Dendritic cell treated with granulocyte-macrophage colony-stimulating factor and Interleukin-4, amounts not matched to agents 40 ng/mL and 50 ng/mL, for 4 days (primary cell): ENCODE measurements at regions of chr15 and their contacts with region 1.

Region 1: GRCh38 chr15:25438601-25439368 is at the start of gene UBE3A:
- H3K4me3 Mint-ChIP-seq: peak within 1 kb of the TSS; percentile 87
- H3K27ac Mint-ChIP-seq: peak within 1 kb of the TSS; percentile 91
- H3K4me1 Mint-ChIP-seq: peaks cover 6% of the 10 kb centered on the region
- H3K27me3 Mint-ChIP-seq: peaks cover 3% of the 10 kb centered on the region

Region 2: DNA sequence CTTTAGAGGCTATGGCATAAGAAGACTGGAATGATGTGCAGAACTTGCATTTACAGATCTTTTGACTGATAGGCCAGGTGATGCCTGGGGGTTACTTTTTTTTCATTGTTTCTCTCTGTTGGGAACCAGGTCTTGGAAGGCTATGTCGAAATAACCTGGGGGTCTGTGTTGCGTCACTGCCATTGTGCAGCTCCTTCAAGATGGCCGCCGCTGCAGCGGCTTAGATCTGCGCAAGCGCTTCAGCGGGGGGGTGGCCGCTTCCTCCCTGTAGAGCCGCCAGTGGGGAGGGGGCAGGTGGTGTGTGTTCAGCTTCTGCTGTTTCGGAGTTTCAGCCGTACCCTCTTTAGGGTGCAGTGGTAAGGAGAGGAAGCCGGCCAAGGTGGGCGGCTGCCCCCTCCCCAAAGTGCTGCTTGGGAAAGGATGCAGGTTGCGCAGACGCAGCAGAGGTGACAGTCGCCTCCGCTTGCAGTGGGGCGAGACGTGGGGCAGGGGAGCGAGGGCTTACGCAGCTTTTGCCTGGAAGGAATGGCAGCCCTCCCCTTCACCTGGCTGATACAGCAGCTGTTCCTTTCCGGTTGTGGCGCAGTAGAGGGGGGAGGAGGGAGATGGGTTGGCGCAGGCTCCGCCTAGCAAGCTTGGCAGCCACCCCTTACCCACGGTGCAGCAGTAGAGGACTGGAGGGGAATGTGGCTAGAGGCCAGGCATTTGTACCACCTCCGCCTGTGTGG is 482.5 kb before region 1 on chr15:
- intact Hi-C with region 1: loop called (anchors 10 kb)
- H3K4me3 Mint-ChIP-seq: peak overlapping the region; percentile 78
- H3K27ac Mint-ChIP-seq: peak overlapping the region; percentile 85
- H3K4me1 Mint-ChIP-seq: no peaks in the 10 kb centered on the region
- H3K27me3 Mint-ChIP-seq: peaks cover 23% of the 10 kb centered on the region

Region 3: DNA sequence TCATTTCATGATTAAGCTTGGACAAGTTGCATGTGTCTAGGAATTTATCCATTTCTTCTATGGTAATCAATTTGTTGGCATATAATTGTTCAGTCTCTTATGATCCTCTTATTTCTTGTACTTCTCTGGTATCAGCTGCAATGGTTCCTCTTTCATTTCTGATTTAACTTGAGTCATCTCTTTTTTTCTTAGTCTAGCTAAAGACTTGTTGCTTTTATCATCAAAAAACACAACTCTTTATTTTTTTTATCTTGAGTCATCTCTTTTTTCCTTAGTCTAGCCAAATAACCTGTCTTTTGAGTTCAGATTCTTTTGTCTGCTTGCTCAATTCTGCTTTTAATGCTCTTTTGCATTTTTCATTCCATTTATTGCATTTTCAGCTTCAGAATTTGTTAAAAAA is 37.3 kb before region 1 on chr15:
- intact Hi-C with region 1: loop called (anchors 5 kb)
- H3K4me3 Mint-ChIP-seq: peak overlapping the region; percentile 9
- H3K27ac Mint-ChIP-seq: peak overlapping the region; percentile 85
- H3K4me1 Mint-ChIP-seq: peaks cover 64% of the 10 kb centered on the region
- H3K27me3 Mint-ChIP-seq: no peaks in the 10 kb centered on the region